ENCODE measurements at regions of chr2 and their contacts with region 1.

Region 1: DNA sequence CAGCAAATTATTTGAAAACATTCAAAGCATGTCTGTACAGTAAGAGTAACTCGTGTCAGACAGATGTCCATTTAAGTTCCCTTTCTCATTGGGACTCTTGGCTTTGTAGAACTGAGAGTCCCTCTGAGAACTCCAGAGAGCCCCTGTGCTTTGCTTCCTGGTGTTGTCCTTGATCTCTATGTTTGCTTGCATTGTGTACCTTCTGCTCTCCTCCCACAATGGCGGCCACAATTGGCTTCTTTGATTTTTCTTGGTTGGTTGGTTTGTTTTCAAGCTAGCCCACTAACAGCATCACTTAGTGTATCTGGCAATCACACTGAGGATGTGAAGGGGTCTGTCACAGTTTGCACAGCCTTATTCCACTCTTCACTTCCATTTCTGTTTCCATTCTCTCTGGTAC is 15.1 kb downstream of the ASB18 start:
- DNase-seq: no peak
- ATAC-seq: no peak
- H3K4me3 ChIP-seq: no peak overlapping the region
- H3K27ac ChIP-seq: no peak overlapping the region
- H3K4me1 ChIP-seq: no peaks in the 10 kb centered on the region
- H3K27me3 ChIP-seq: peaks cover 2% of the 10 kb centered on the region
- CTCF ChIP-seq: no peak
- POLR2A ChIP-seq: no peak
- RAD21 ChIP-seq: no peak

Region 2: DNA sequence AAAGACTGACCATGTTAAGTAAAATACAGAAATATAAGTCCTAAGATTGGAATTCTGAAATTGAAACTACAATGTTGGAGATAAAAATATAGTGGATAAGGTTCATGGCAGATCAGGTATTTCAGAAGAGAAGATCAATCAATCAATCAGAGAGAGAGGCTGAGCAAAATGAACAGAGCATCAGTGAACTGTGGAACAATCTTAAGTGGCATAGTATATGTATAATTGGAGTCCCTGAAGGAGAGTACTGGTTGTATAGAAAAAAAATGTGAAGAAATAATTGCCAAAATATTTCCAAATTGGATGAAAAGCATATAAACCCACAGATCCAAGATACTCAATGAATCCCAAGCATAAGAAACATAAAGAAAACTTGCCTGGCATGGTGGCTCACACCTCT is 19.9 kb before region 1 on chr2:
- CTCF ChIA-PET with region 1: no interaction called
- POLR2A ChIA-PET with region 1: no interaction called
- dilution Hi-C with region 1: no loop called
- in situ Hi-C with region 1: no loop called
- intact Hi-C with region 1: loop called (anchors 1 kb)
- DNase-seq: no peak
- ATAC-seq: no peak
- H3K4me3 ChIP-seq: no peak overlapping the region
- H3K27ac ChIP-seq: no peak overlapping the region
- H3K4me1 ChIP-seq: no peaks in the 10 kb centered on the region
- H3K27me3 ChIP-seq: no peaks in the 10 kb centered on the region
- CTCF ChIP-seq: no peak
- POLR2A ChIP-seq: no peak
- RAD21 ChIP-seq: no peak

Measured in IMR-90 (cell line).